ENCODE measurements at regions of chr11 and their contacts with region 1.

Region 1: GRCh38 chr11:75525596-75526541 is at the start of gene GDPD5:
- DNase-seq: peak; percentile 98
- H3K4me3 Mint-ChIP-seq: peak within 1 kb of the TSS; percentile 85
- H3K27ac Mint-ChIP-seq: peak within 1 kb of the TSS; percentile 78
- H3K4me1 Mint-ChIP-seq: peaks cover 15% of the 10 kb centered on the region
- H3K27me3 Mint-ChIP-seq: peaks cover 27% of the 10 kb centered on the region
- total RNA-seq, gene GDPD5: 13.4 and 14.5 TPM in 2 replicates

Region 2: GRCh38 chr11:75474878-75475766 is 50.7 kb before region 1 on chr11:
- intact Hi-C with region 1: loop called (anchors 2 kb)
- DNase-seq: peak; percentile 91
- H3K4me3 Mint-ChIP-seq: peak overlapping the region; percentile 67
- H3K27ac Mint-ChIP-seq: peak overlapping the region; percentile 87
- H3K4me1 Mint-ChIP-seq: peaks cover 16% of the 10 kb centered on the region
- H3K27me3 Mint-ChIP-seq: peaks cover 2% of the 10 kb centered on the region

Region 3: DNA sequence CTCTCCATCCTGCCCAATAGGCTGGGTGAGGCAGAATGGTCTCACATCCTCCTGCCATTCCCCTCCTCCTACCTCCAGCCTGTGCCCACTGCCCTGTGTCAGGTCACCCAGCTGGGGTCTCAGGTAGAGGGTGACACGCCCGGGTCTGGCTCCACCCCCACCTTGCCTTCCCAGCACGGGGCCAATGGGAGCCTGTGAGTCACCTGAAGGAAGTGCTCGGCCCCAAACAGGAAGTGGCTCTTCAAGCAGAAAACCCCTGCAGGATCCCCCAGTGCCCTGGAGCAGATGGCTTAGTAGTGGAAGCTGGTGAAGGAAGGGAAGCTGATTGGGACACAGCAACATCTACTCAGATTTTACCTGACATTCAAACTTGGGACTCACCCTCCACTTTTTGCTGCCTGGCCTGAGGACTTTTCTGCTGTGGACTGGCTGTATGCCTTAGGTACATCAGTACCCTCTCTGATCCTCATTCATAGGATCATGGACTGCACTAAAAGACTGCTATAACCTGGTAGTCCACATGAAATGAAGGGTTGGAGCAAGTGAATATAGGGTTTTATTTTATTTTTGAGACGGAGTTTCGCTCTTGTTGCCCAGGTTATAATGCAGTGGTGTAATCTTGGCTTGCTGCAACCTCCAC is 33.6 kb before region 1 on chr11:
- intact Hi-C with region 1: loop called (anchors 2 kb)
- DNase-seq: peak; percentile 84
- H3K4me3 Mint-ChIP-seq: peak overlapping the region; percentile 75
- H3K27ac Mint-ChIP-seq: peak overlapping the region; percentile 88
- H3K4me1 Mint-ChIP-seq: peaks cover 6% of the 10 kb centered on the region
- H3K27me3 Mint-ChIP-seq: no peaks in the 10 kb centered on the region

Region 4: GRCh38 chr11:75562048-75562835 is 36.4 kb after region 1 on chr11 and contains the start of gene SERPINH1:
- intact Hi-C with region 1: loop called (anchors 2 kb)
- DNase-seq: peak; percentile 91
- H3K4me3 Mint-ChIP-seq: peak within 1 kb of the TSS; percentile 92
- H3K27ac Mint-ChIP-seq: peak within 1 kb of the TSS; percentile 92
- H3K4me1 Mint-ChIP-seq: peaks cover 18% of the 10 kb centered on the region
- H3K27me3 Mint-ChIP-seq: peaks cover 5% of the 10 kb centered on the region
- total RNA-seq, gene SERPINH1: 29.6 and 30.3 TPM in 2 replicates

Measured in activated CD4-positive, alpha-beta T cell treated with anti-CD3 and anti-CD28 coated beads, Interleukin-2, amount 10 ng/mL, durations not matched to agents 24 days and 14 days (primary cell).